ENCODE measurements at regions of chr9 and their contacts with region 1.

Region 1: DNA sequence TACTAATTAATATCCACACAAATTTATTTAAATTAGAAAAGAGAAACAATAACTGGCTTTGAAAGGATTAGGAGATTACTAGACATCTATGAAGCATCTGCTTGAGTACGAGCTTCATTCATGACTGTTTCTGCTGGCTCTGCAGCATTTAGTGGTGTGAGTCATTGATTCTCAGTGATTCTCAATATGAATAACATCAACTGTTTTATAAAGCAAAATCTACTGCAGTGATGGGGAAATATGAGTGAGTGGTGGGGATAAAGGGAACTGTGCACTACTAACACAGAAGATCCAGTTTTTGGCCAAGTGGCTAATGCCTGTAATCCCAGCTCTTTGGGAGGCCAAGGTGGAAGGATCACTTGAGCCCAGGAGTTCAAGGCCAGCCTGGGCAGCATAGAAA is 8.4 kb downstream of the FNBP1 start:
- DNase-seq: no peak
- ATAC-seq: peak; percentile 3
- H3K4me3 ChIP-seq: peak overlapping the region; percentile 61
- H3K27ac ChIP-seq: peak overlapping the region; percentile 83
- H3K4me1 ChIP-seq: peaks cover 52% of the 10 kb centered on the region
- H3K27me3 ChIP-seq: no peaks in the 10 kb centered on the region
- CTCF ChIP-seq: no peak
- EP300 ChIP-seq: no peak
- POLR2A ChIP-seq: no peak
- RAD21 ChIP-seq: no peak

Region 2: GRCh38 chr9:130018260-130018659 is 16.3 kb before region 1 on chr9:
- CTCF ChIA-PET with region 1: interaction called, 12 read pairs
- POLR2A ChIA-PET with region 1: interaction called, 220 read pairs
- RAD21 ChIA-PET with region 1: interaction called, 160 read pairs
- SMC1A ChIA-PET with region 1: interaction called, 73 read pairs
- in situ Hi-C with region 1: no loop called
- intact Hi-C with region 1: no loop called
- DNase-seq: no peak
- ATAC-seq: peak; percentile 26
- H3K4me3 ChIP-seq: no peak overlapping the region
- H3K27ac ChIP-seq: peak overlapping the region; percentile 83
- H3K4me1 ChIP-seq: peaks cover 88% of the 10 kb centered on the region
- H3K27me3 ChIP-seq: no peaks in the 10 kb centered on the region
- CTCF ChIP-seq: no peak
- EP300 ChIP-seq: no peak
- POLR2A ChIP-seq: no peak
- RAD21 ChIP-seq: no peak

Measured in GM12878 (cell line).